ENCODE measurements at regions of chr16 and their contacts with region 1.

Region 1: GRCh38 chr16:11079652-11080187 is 135.4 kb downstream of the CLEC16A start:
- DNase-seq: peak; percentile 74
- H3K4me3 Mint-ChIP-seq: peak overlapping the region; percentile 36
- H3K27ac Mint-ChIP-seq: peak overlapping the region; percentile 96
- H3K4me1 Mint-ChIP-seq: peaks cover 61% of the 10 kb centered on the region
- H3K27me3 Mint-ChIP-seq: no peaks in the 10 kb centered on the region

Region 2: DNA sequence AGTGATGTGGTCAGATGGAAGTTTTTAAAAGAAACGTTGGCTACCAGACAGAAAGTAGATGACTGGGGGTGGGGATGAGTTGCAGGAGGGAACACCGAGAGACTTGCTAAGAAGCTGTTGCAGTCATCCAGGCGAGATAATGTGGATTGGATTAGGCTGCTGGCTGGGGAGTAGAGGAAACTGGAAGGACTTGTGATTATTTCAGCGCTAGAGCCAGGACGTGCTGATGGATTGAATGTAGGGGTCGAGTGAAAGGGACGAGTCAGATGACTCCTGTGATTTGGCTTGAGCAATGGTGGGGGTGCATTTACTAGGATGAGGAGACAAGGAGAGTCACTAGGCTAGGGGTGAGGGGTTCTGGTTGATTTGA is 46.8 kb before region 1 on chr16:
- CTCF ChIA-PET with region 1: no interaction called
- intact Hi-C with region 1: no loop called
- DNase-seq: no peak
- H3K4me3 Mint-ChIP-seq: no peak overlapping the region
- H3K27ac Mint-ChIP-seq: no peak overlapping the region
- H3K4me1 Mint-ChIP-seq: no peaks in the 10 kb centered on the region
- H3K27me3 Mint-ChIP-seq: no peaks in the 10 kb centered on the region

Region 3: GRCh38 chr16:11051879-11052808 is 27.6 kb before region 1 on chr16:
- CTCF ChIA-PET with region 1: no interaction called
- intact Hi-C with region 1: loop called (anchors 1 kb)
- DNase-seq: peak; percentile 71
- H3K4me3 Mint-ChIP-seq: no peak overlapping the region
- H3K27ac Mint-ChIP-seq: peak overlapping the region; percentile 54
- H3K4me1 Mint-ChIP-seq: peaks cover 31% of the 10 kb centered on the region
- H3K27me3 Mint-ChIP-seq: no peaks in the 10 kb centered on the region

Region 4: DNA sequence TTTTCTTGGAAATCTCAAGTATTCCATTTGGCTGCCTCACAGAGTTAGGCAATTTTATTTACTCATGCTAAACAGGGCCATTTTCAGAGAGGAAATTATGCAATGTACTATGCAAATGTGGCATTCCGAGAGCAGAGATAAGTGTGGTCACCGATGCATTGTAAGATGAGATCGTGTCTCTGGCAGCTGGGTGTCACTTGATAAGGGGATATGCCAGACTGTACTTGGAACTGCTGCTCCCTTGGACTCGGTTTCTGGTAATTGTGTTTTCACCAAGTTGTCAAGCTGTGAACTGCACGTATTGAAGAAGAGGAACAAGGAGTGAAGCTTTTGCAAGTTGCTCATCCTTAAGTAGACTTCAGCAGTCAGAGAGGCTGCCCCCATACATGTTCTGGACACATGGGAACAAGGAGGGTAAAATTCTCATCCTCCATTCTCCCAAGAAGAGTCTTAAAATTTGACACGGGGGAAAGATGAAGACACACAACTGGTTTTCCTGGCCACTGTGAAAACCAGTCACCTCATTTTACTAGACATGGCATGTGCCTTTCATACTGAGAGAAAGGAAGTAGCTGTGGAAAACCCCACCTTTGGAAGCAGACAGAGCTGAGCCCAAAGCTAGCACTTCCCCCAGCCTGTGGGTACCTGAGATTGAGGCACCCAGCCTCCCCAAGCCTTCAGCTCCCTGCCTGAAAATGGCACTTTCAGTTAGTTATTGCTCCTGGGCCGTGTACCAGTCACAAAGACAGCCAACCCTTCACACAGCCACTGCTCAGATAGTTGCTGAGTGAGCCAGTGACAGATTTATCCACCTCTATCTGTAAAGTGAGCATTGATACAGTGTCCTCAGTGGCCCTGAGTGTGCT is 25.6 kb after region 1 on chr16:
- CTCF ChIA-PET with region 1: interaction called, 3 read pairs
- intact Hi-C with region 1: loop called (anchors 1 kb)
- DNase-seq: peak; percentile 74
- H3K4me3 Mint-ChIP-seq: no peak overlapping the region
- H3K27ac Mint-ChIP-seq: peak overlapping the region; percentile 84
- H3K4me1 Mint-ChIP-seq: peaks cover 41% of the 10 kb centered on the region
- H3K27me3 Mint-ChIP-seq: no peaks in the 10 kb centered on the region

Region 5: DNA sequence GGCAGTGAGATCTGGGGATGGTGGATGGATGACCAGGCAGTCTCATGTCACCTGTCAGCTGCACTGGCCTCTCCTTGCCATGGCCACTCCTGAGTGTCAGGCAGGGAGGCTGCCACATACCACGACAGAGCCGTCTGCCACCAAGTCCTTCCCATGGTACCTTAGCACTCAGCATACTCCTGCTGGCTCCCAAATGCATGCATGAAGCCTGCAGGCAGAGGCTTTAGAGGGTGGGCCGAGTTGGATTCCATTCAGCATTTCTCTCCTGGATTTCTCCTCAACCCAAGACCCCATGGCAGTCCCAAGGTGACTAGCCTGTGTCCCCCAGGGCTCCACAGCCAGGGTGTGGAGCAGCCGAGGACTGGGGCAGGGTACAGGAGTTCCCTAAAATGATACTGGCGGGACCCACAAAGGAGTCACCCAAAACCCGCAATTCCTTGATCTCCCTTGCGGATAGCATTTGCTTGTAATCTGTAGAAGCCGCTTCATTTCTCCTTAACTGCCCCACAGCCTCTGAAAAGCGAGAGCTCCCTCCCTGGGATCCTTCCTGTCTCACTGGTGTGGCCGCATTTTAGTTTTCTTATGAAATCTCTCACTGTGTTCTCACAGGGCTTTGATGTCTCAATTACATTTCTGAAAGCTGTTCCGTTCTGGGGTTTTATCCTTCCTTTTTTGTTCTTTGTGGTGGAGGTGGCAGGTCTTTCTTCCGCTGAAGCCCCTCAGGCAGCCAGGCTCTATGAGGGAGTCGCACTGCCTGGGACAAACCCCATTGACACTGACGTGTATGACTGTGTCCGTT is 34.8 kb after region 1 on chr16:
- CTCF ChIA-PET with region 1: interaction called, 3 read pairs
- intact Hi-C with region 1: loop called (anchors 1 kb)
- DNase-seq: peak; percentile 77
- H3K4me3 Mint-ChIP-seq: peak overlapping the region; percentile 23
- H3K27ac Mint-ChIP-seq: peak overlapping the region; percentile 83
- H3K4me1 Mint-ChIP-seq: peaks cover 33% of the 10 kb centered on the region
- H3K27me3 Mint-ChIP-seq: no peaks in the 10 kb centered on the region

Region 6: DNA sequence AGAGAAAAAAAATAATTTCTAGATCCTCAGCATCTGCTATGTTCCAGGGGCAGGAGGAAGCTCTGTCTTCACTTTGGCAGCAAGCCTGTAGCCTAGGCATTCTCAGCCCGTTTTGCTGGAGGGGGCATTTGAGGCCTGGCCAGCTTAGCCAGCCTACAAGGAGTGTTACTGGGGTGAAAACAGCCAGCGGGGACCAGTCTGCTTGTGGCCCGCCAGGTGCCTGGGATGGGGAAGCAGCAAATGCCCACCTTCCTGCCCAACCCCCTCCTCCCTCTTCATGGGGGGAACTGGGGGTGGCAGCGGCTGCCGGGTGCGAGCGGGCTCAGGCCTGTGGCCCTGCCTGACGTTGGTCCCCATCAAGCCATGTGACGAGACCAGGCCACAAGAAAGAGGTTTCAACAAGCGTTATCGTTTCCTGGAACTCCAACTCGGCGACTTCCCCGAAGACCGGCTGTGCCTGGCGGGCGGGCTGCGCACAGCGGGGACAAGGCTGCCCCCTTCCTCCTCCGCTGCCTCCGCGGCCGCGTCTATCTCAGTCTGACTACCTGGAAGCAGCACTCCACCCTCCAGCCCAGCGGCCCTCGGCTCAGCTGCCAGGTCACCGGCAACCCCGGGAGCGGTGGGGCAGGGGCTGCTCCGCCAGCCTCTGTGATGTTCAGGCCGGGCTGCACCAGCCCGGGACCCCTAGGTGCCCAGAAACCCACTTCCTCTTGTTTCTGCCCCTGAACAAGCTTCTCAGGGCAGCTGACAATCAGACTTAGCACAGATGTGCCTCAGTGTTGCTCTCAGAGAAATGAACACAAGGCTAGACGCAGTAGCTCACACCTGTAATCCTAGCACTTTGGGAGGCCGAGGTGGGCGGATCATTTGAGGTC is 153.4 kb after region 1 on chr16:
- CTCF ChIA-PET with region 1: no interaction called
- intact Hi-C with region 1: no loop called
- DNase-seq: peak; percentile 97
- H3K4me3 Mint-ChIP-seq: peak overlapping the region; percentile 57
- H3K27ac Mint-ChIP-seq: peak overlapping the region; percentile 99
- H3K4me1 Mint-ChIP-seq: peaks cover 55% of the 10 kb centered on the region
- H3K27me3 Mint-ChIP-seq: no peaks in the 10 kb centered on the region